ENCODE measurements at regions of chr4 and their contacts with region 1.

Region 1: DNA sequence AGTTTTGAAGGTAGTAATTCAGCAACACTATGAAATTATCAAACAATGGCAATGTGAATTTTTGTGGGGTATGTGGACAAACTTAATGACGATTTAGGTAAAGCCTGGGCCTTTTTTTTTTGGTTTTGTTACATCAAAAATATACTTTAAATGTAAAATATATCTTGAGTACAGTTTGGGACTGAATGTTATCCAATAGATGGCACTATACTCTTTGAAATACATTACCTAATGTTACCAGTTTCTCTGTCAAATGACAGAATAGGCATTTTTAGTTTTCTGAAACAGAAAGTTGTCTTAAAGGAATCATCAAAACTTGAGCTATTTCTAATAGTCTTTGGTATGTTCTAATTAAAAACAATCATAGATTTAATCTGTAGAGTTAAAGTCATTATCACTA is 1651.9 kb downstream of the C4orf33 start:
- DNase-seq: no peak
- ATAC-seq: no peak
- H3K4me3 ChIP-seq: no peak overlapping the region
- H3K27ac ChIP-seq: no peak overlapping the region
- H3K4me1 ChIP-seq: no peaks in the 10 kb centered on the region
- H3K27me3 ChIP-seq: no peaks in the 10 kb centered on the region; a peak in 1 of 5 replicates
- CTCF ChIP-seq: peak; percentile 32; the same call in 1 of the 2 replicates
- EP300 ChIP-seq: no peak
- POLR2A ChIP-seq: no peak
- RAD21 ChIP-seq: no peak

Region 2: GRCh38 chr4:132227151-132227856 is 1479.5 kb after region 1 on chr4:
- CTCF ChIA-PET with region 1: no interaction called
- POLR2A ChIA-PET with region 1: no interaction called
- in situ Hi-C with region 1: no loop called
- intact Hi-C with region 1: loop called (anchors 5 kb)
- DNase-seq: peak; percentile 52
- ATAC-seq: peak; percentile 92
- H3K4me3 ChIP-seq: peak overlapping the region; percentile 34 to 70 (median 41); a peak in 5 of 6 replicates
- H3K27ac ChIP-seq: no peak overlapping the region
- H3K4me1 ChIP-seq: peaks cover 8% of the 10 kb centered on the region; the same call in 1 of the 2 replicates
- H3K27me3 ChIP-seq: no peaks in the 10 kb centered on the region
- CTCF ChIP-seq: no peak
- EP300 ChIP-seq: no peak
- POLR2A ChIP-seq: no peak
- RAD21 ChIP-seq: no peak